Endothelial cell of umbilical vein (primary cell): ENCODE measurements at regions of chr1 and their contacts with region 1.

Region 1: DNA sequence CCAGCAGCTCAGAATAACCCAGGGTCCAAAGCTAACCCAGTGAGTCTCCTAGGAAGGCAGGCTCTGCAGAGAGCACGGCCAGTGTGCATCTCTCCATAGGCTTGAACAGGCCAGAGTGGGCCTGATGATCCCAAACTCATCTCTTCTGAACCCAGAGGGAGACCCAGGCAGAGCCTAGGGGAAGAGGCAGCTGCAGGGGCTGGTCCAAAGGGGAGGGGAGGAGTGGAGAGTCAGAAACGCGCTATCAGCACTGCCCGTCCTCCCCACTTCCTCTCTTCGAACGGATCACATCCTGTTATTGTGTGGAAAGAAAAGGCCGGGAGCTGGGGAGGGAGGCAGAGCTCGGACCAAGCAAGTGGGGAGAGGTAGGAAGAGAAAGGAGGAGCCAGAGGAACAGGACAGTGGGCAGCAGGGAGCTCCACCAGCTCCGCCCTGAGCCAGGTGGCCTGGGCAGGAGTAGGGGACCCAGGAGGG is 20.2 kb downstream of the TAL1 start:
- DNase-seq: peak; percentile 96
- H3K4me3 ChIP-seq: no peak overlapping the region
- H3K27ac ChIP-seq: peak overlapping the region; percentile 92
- H3K4me1 ChIP-seq: peaks cover 58% of the 10 kb centered on the region
- H3K27me3 ChIP-seq: no peaks in the 10 kb centered on the region
- CTCF ChIP-seq: no peak
- POLR2A ChIP-seq: peak; percentile 87

Region 2: GRCh38 chr1:47192458-47193384 is 19.1 kb before region 1 on chr1:
- CTCF ChIA-PET with region 1: interaction called, 24 read pairs
- POLR2A ChIA-PET with region 1: no interaction called
- dilution Hi-C with region 1: no loop called
- intact Hi-C with region 1: loop called (anchors 1 kb)
- DNase-seq: peak; percentile 76
- H3K4me3 ChIP-seq: no peak overlapping the region
- H3K27ac ChIP-seq: no peak overlapping the region
- H3K4me1 ChIP-seq: peaks cover 5% of the 10 kb centered on the region
- H3K27me3 ChIP-seq: no peaks in the 10 kb centered on the region
- CTCF ChIP-seq: peak; percentile 94 to 97
- POLR2A ChIP-seq: no peak

Region 3: GRCh38 chr1:47225430-47226100 is 13.7 kb after region 1 on chr1:
- CTCF ChIA-PET with region 1: interaction called, 34 read pairs
- POLR2A ChIA-PET with region 1: interaction called, 25 read pairs
- dilution Hi-C with region 1: no loop called
- intact Hi-C with region 1: loop called (anchors 1 kb)
- DNase-seq: peak; percentile 48
- H3K4me3 ChIP-seq: peak overlapping the region; percentile 3 to 41 (median 6)
- H3K27ac ChIP-seq: peak overlapping the region; percentile 65
- H3K4me1 ChIP-seq: peaks cover 37% of the 10 kb centered on the region
- H3K27me3 ChIP-seq: no peaks in the 10 kb centered on the region
- CTCF ChIP-seq: no peak
- POLR2A ChIP-seq: no peak

Region 4: DNA sequence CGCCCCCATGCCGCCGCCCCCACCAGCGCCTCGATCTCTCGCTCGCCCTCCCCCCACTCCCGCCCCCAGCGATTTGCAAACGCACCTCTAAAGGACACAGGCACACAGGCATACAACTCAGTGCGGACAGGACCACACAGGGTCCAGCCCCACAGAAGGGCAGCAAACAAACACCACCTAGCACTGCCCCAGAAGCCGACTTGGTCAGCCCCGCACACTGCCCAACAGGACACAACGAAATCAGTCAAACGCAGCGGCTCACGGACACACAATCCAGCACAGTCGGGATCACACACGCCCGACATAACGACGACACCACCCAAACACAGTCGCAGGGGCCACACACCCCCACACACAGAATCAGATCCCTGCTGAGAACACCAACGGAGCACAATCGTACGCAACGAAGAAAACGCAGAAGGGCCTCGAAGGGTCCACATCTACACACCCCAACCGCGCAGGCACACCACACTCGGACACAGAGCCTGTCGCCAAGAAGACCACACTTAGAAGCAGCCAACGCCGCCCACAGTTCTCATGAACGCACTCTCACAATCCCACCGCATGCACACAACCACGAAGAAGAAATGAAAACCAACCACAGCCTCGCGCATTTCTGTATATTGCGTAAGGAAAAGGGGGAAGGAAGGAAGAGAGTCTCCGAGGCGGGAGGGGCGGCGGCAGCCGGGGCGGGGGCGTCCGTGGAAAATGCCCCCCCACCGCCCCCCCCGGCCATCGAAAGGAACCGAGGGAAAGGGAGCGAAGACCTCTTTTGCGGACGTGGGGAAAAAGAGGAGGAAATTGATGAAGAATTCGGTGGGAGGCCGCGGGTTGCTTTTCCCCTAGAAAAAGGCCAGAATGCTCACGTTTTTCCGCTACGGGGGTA is 19.7 kb after region 1 on chr1:
- CTCF ChIA-PET with region 1: interaction called, 34 read pairs
- POLR2A ChIA-PET with region 1: interaction called, 25 read pairs
- dilution Hi-C with region 1: no loop called
- intact Hi-C with region 1: loop called (anchors 1 kb)
- DNase-seq: peak; percentile 75
- H3K4me3 ChIP-seq: peak overlapping the region; percentile 62 to 94 (median 81)
- H3K27ac ChIP-seq: peak overlapping the region; percentile 77
- H3K4me1 ChIP-seq: peaks cover 53% of the 10 kb centered on the region
- H3K27me3 ChIP-seq: no peaks in the 10 kb centered on the region
- CTCF ChIP-seq: no peak
- POLR2A ChIP-seq: peak; percentile 76